CD8-positive, alpha-beta T cell (primary cell): ENCODE measurements at regions of chrX and their contacts with region 1.

Region 1: GRCh38 chrX:155070975-155071693 is at the starts of genes BRCC3, CMC4 and MTCP1:
- DNase-seq: peak; percentile 55 to 86 (median 70)
- ATAC-seq: peak; percentile 78
- H3K4me3 ChIP-seq: peak within 1 kb of the TSS; percentile 81 to 83
- H3K4me3 Mint-ChIP-seq: peak within 1 kb of the TSS; percentile 88
- H3K27ac ChIP-seq: peak within 1 kb of the TSS; percentile 80 to 84
- H3K27ac Mint-ChIP-seq: peak within 1 kb of the TSS; percentile 96
- H3K4me1 ChIP-seq: peaks cover 11% of the 10 kb centered on the region
- H3K4me1 Mint-ChIP-seq: peaks cover 58% of the 10 kb centered on the region
- H3K27me3 ChIP-seq: no peaks in the 10 kb centered on the region
- H3K27me3 Mint-ChIP-seq: no peaks in the 10 kb centered on the region
- CTCF ChIP-seq: no peak
- total RNA-seq, gene BRCC3: 8.9 to 9.6 TPM
- total RNA-seq, gene CMC4: 5.0 to 5.2 TPM
- total RNA-seq, gene MTCP1: 16.9 to 19.0 TPM

Region 2: GRCh38 chrX:155026726-155027508 is 44.2 kb before region 1 on chrX and contains the start of gene FUNDC2:
- CTCF ChIA-PET with region 1: no interaction called
- POLR2A ChIA-PET with region 1: interaction called, 3 read pairs
- intact Hi-C with region 1: loop called (anchors 1 kb)
- DNase-seq: peak; percentile 87 to 97 (median 92)
- ATAC-seq: peak; percentile 85
- H3K4me3 ChIP-seq: peak within 1 kb of the TSS; percentile 73 to 76
- H3K4me3 Mint-ChIP-seq: peak within 1 kb of the TSS; percentile 88
- H3K27ac ChIP-seq: peak within 1 kb of the TSS; percentile 96 to 98
- H3K27ac Mint-ChIP-seq: peak within 1 kb of the TSS; percentile 96
- H3K4me1 ChIP-seq: no peaks in the 10 kb centered on the region
- H3K4me1 Mint-ChIP-seq: peaks cover 27% of the 10 kb centered on the region
- H3K27me3 ChIP-seq: no peaks in the 10 kb centered on the region
- H3K27me3 Mint-ChIP-seq: no peaks in the 10 kb centered on the region
- CTCF ChIP-seq: no peak
- total RNA-seq, gene FUNDC2: 46.5 to 50.8 TPM

Region 3: GRCh38 chrX:155056877-155057792 is 14.0 kb before region 1 on chrX:
- CTCF ChIA-PET with region 1: interaction called, 5 read pairs
- POLR2A ChIA-PET with region 1: interaction called, 3 read pairs
- intact Hi-C with region 1: loop called in 1 of 2 experiments (anchors 2 kb)
- DNase-seq: peak; percentile 4 to 75 (median 40)
- ATAC-seq: peak; percentile 86
- H3K4me3 ChIP-seq: peak overlapping the region; percentile 20 to 31
- H3K4me3 Mint-ChIP-seq: peak overlapping the region; percentile 74
- H3K27ac ChIP-seq: peak overlapping the region in 1 of 2 experiments; percentile 36
- H3K27ac Mint-ChIP-seq: peak overlapping the region; percentile 62
- H3K4me1 ChIP-seq: peaks cover 12% of the 10 kb centered on the region
- H3K4me1 Mint-ChIP-seq: peaks cover 16% of the 10 kb centered on the region
- H3K27me3 ChIP-seq: no peaks in the 10 kb centered on the region
- H3K27me3 Mint-ChIP-seq: no peaks in the 10 kb centered on the region
- CTCF ChIP-seq: peak; percentile 64